CD4-positive, alpha-beta memory T cell (primary cell): ENCODE measurements at regions of chr1 and their contacts with region 1.

Region 1: DNA sequence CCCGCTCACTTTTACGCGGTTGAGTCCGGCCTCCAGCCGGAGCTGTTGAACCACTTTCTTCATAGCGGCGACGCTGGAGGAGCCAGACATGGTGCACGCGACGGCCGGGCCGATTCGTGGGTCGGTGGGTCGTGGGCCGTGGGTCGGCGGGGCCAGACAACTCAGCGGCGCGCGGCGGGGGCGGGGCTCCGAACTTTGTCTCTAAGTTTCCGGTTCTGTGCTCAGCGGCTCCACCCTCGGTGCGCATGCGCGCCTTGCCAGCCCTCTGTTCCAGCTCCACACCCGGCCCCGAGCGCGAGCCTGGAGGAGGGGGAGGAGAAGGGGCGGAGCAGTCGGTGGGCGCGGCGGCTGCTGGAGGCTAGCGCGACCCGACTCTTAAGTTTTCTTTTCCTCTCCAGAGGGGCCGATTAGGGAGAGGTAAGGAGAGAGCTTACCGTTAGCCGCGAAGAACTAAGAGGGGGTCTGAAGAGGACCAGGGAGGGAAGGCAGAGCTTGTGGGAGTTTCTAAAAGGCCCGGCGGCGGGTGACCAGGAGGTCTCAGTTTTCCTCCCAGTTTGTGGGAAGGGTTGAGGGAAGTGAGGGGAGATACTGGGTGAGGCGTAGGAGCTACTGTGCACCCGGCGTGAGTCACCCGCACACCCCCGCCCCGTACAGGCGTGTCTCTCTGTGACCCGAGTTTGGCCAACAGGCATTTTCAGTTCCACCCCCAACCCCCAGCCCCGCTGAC is at the starts of genes GNG5 and SPATA1:
- DNase-seq: peak; percentile 94 to 97 (median 96)
- H3K4me3 ChIP-seq: peak within 1 kb of the TSS; percentile 68 to 87
- H3K4me3 Mint-ChIP-seq: peak within 1 kb of the TSS; percentile 92 to 99 (median 98)
- H3K27ac ChIP-seq: peak within 1 kb of the TSS; percentile 81
- H3K27ac Mint-ChIP-seq: peak within 1 kb of the TSS; percentile 93 to 99 (median 97)
- H3K4me1 ChIP-seq: peaks cover 47% of the 10 kb centered on the region
- H3K4me1 Mint-ChIP-seq: peaks cover 28 to 55% (median 34%) of the 10 kb centered on the region in 4 donors
- H3K27me3 ChIP-seq: no peaks in the 10 kb centered on the region
- H3K27me3 Mint-ChIP-seq: no peaks in the 10 kb centered on the region
- total RNA-seq, gene GNG5: 38.1 to 45.5 TPM
- total RNA-seq, gene SPATA1: 1.7 to 3.4 TPM

Region 2: DNA sequence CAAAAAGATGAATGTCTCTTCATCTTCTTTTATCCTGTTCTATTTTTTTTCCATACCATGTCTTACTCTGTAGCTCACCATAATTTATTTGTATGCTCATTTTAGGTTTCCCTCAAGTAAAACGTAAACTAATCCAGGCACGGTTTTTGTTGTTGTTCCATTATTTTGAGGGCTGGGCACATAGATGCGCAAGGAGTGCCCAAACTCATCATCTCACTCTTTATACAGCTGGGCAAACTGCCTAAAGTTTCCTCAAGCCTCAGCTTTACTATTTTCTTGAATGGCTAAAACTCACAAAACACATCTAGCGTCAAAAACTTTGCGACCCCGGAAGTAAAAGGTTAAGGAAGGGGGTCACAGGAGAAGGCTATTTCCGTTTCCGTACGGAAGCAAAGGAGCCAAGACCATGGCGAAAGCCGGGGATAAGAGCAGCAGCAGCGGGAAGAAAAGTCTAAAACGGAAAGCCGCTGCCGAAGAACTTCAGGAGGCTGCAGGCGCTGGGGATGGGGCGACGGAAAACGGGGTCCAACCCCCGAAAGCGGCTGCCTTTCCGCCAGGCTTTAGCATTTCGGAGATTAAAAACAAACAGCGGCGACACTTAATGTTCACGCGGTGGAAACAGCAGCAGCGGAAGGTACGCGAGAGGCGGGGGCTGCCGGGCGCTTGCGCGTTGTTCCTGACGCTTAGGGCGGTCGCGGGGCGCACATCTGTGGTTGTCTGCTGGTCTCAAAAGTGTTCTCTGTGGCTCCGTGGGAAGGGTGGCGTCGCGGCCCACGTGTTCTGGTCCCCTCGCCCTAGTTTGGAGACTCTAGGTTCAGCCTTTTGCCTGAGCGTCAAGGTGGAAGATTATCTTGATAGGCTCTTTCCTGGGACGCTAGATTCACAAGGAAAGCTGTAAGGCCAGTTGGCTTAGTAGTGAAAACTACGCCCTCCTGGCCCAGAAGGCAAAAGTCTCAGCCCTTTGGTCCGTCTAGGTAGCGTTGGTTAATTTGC is 27.0 kb before region 1 on chr1 and contains the start of gene RPF1:
- CTCF ChIA-PET with region 1: interaction called, 7 read pairs
- POLR2A ChIA-PET with region 1: interaction called, 68 read pairs
- intact Hi-C with region 1: loop called (anchors 1 kb)
- DNase-seq: peak; percentile 83 to 86 (median 85)
- H3K4me3 ChIP-seq: peak within 1 kb of the TSS; percentile 93
- H3K4me3 Mint-ChIP-seq: peak within 1 kb of the TSS; percentile 96 to 100 (median 99)
- H3K27ac ChIP-seq: peak within 1 kb of the TSS; percentile 65
- H3K27ac Mint-ChIP-seq: peak within 1 kb of the TSS; percentile 96 to 99 (median 98)
- H3K4me1 ChIP-seq: peaks cover 41% of the 10 kb centered on the region
- H3K4me1 Mint-ChIP-seq: peaks cover 31 to 54% (median 41%) of the 10 kb centered on the region in 4 donors
- H3K27me3 ChIP-seq: no peaks in the 10 kb centered on the region
- H3K27me3 Mint-ChIP-seq: peaks cover 13 to 21% of the 10 kb centered on the region in 2 donors
- total RNA-seq, gene RPF1: 41.7 to 46.2 TPM

Region 3: GRCh38 chr1:84573967-84574842 is 68.0 kb after region 1 on chr1 and contains the start of gene CTBS:
- CTCF ChIA-PET with region 1: interaction called, 15 read pairs
- POLR2A ChIA-PET with region 1: interaction called, 75 read pairs
- intact Hi-C with region 1: loop called (anchors 1 kb)
- DNase-seq: peak; percentile 80 to 84 (median 83)
- H3K4me3 ChIP-seq: peak within 1 kb of the TSS; percentile 78 to 97
- H3K4me3 Mint-ChIP-seq: peak within 1 kb of the TSS; percentile 96 to 99 (median 98)
- H3K27ac ChIP-seq: peak within 1 kb of the TSS; percentile 98
- H3K27ac Mint-ChIP-seq: peak within 1 kb of the TSS; percentile 99 to 100 (median 100)
- H3K4me1 ChIP-seq: peaks cover 37% of the 10 kb centered on the region
- H3K4me1 Mint-ChIP-seq: peaks cover 29 to 46% (median 39%) of the 10 kb centered on the region in 4 donors
- H3K27me3 ChIP-seq: no peaks in the 10 kb centered on the region
- H3K27me3 Mint-ChIP-seq: no peaks in the 10 kb centered on the region
- total RNA-seq, gene CTBS: 17.4 to 18.2 TPM

Region 4: GRCh38 chr1:85707990-85708828 is 1202.0 kb after region 1 on chr1 and contains the start of gene ZNHIT6:
- CTCF ChIA-PET with region 1: no interaction called
- POLR2A ChIA-PET with region 1: no interaction called
- intact Hi-C with region 1: loop called (anchors 10 kb)
- DNase-seq: peak; percentile 87 to 95 (median 91)
- H3K4me3 ChIP-seq: peak within 1 kb of the TSS; percentile 70 to 93
- H3K4me3 Mint-ChIP-seq: no peak within 1 kb of the TSS
- H3K27ac ChIP-seq: peak within 1 kb of the TSS; percentile 73
- H3K27ac Mint-ChIP-seq: no peak within 1 kb of the TSS
- H3K4me1 ChIP-seq: peaks cover 43% of the 10 kb centered on the region
- H3K4me1 Mint-ChIP-seq: peaks cover 19 to 29% (median 25%) of the 10 kb centered on the region in 4 donors
- H3K27me3 ChIP-seq: no peaks in the 10 kb centered on the region
- H3K27me3 Mint-ChIP-seq: no peaks in the 10 kb centered on the region
- total RNA-seq, gene ZNHIT6: 18.0 to 19.2 TPM